ENCODE measurements at regions of chr20 and their contacts with region 1.

Region 1: DNA sequence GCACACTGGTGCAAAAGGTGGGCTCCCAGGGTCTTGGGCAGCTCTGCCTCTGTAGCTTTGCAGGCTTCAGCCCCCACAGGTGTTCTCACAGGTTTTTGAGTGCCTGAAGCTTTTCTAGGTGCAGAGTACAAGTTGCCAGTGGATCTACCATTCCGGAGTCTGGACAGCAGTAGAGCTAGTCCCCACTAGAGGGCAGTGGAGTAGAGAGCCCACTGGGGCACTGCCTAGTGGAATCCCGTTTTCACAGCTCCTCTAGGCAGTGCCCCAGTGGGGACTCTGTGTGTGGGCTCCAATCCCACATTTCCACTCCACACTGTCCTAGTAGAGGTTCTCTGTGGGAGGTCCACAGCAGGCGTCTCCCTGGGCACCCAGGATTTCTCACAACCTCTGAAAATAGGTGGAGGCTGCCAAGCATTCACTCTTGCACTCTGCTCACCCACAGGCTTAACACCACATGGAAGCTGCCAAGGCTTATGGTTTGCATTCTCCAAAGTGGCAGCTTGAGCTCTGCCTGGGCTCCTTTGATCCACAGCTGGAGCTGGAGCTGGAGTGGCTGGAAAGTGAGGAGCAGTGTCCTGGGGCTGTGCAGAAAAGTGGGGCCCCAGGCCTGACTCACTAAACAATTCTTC is 86.3 kb upstream of the PROKR2 start:
- DNase-seq: peak; percentile 53 to 55
- ATAC-seq: peak; percentile 80 to 99
- H3K4me3 ChIP-seq: no peak overlapping the region
- H3K27ac ChIP-seq: no peak overlapping the region
- H3K4me1 ChIP-seq: no peaks in the 10 kb centered on the region
- CTCF ChIP-seq: peak; percentile 55
- EP300 ChIP-seq: no peak
- POLR2A ChIP-seq: no peak
- RAD21 ChIP-seq: peak; percentile 40 to 59; a peak in 4 of 5 replicates

Region 2: GRCh38 chr20:5119435-5120188 is 283.4 kb before region 1 on chr20 and contains the start of gene PCNA:
- CTCF ChIA-PET with region 1: no interaction called
- POLR2A ChIA-PET with region 1: no interaction called
- DNase-seq: peak; percentile 99
- ATAC-seq: peak; percentile 96 to 97
- H3K4me3 ChIP-seq: peak within 1 kb of the TSS; percentile 78
- H3K27ac ChIP-seq: peak within 1 kb of the TSS; percentile 85 to 90
- H3K4me1 ChIP-seq: peaks cover 31% of the 10 kb centered on the region
- CTCF ChIP-seq: no peak; the same call in 2 of the 3 replicates
- EP300 ChIP-seq: no peak
- POLR2A ChIP-seq: peak; percentile 99
- RAD21 ChIP-seq: no peak
- polyA plus RNA-seq, gene PCNA: 388 and 450 TPM in 2 replicates

Region 3: GRCh38 chr20:5364136-5364821 is 38.7 kb before region 1 on chr20:
- CTCF ChIA-PET with region 1: interaction called, 11 read pairs
- POLR2A ChIA-PET with region 1: no interaction called
- DNase-seq: peak in 1 of 2 experiments; percentile 43
- ATAC-seq: peak in 1 of 2 experiments; percentile 69; a peak in 3 of 6 replicates
- H3K4me3 ChIP-seq: no peak overlapping the region
- H3K27ac ChIP-seq: peak overlapping the region; percentile 50 to 71
- H3K4me1 ChIP-seq: peaks cover 18% of the 10 kb centered on the region
- CTCF ChIP-seq: no peak
- EP300 ChIP-seq: no peak
- POLR2A ChIP-seq: no peak
- RAD21 ChIP-seq: no peak

Region 4: DNA sequence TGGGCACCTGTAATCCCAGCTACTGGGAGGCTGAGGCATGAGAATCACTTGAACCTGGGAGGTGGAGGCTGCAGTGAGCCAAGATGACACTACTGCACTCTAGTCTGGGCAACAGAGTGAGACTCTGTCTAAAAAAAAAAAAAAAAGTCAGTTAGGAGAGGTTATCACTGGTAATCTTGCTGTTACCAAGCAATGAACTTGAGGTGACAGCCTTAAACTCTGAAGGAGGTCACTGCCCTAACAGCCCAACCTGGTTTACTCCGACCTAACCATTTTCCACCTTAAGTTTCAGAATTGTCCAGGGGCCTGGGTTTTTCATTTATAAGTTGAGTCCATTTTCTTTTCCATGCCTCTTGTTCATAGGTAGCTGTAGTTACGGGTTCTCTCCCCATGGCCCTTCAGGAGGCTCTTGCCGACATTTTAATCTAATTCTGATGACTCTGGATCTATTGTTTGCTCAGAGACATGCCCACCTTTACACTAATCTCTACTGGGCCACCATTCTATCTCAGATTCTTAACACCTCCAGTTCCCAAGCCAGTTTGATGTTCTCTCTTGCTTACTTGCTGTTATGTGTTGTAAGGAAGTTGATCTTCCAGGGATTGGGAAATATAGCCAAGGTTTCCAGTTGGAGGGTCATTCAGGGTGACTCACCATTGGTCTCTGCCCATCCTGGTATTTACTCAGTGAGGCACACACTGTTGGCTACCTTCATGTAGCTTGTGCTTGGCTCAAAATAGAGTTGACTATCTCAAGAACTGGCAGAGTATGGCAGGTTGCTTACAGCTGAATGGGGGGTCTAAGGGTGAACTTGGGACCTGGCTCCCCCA is 376.3 kb after region 1 on chr20:
- CTCF ChIA-PET with region 1: no interaction called
- POLR2A ChIA-PET with region 1: no interaction called
- DNase-seq: peak; percentile 64 to 89
- ATAC-seq: peak; percentile 90
- H3K4me3 ChIP-seq: no peak overlapping the region
- H3K27ac ChIP-seq: peak overlapping the region; percentile 80 to 82
- H3K4me1 ChIP-seq: peaks cover 49% of the 10 kb centered on the region
- CTCF ChIP-seq: no peak
- EP300 ChIP-seq: peak; percentile 36 to 65; a peak in 2 of 5 replicates
- POLR2A ChIP-seq: no peak
- RAD21 ChIP-seq: no peak

Measured in A549 (cell line).